HCT116 (cell line): ENCODE measurements at regions of chr11 and their contacts with region 1.

Region 1: GRCh38 chr11:7278314-7278917 is 26.7 kb downstream of the SYT9 start:
- DNase-seq: peak; percentile 24
- ATAC-seq: peak; percentile 77
- H3K4me3 ChIP-seq: no peak overlapping the region
- H3K27ac ChIP-seq: no peak overlapping the region
- H3K4me1 ChIP-seq: no peaks in the 10 kb centered on the region
- H3K27me3 ChIP-seq: peaks cover 20% of the 10 kb centered on the region; the same call in 1 of the 2 replicates
- CTCF ChIP-seq: peak in 2 of 3 experiments; percentile 59 to 69; a peak in 5 of 6 replicates
- POLR2A ChIP-seq: no peak
- RAD21 ChIP-seq: peak; percentile 57

Region 2: GRCh38 chr11:6812390-6813005 is 465.9 kb before region 1 on chr11:
- CTCF ChIA-PET with region 1: no interaction called
- POLR2A ChIA-PET with region 1: no interaction called
- RAD21 ChIA-PET with region 1: no interaction called
- intact Hi-C with region 1: loop called (anchors 10 kb)
- DNase-seq: peak; percentile 15
- ATAC-seq: peak; percentile 94
- H3K4me3 ChIP-seq: no peak overlapping the region
- H3K27ac ChIP-seq: no peak overlapping the region
- H3K4me1 ChIP-seq: no peaks in the 10 kb centered on the region
- H3K27me3 ChIP-seq: peaks cover 10% of the 10 kb centered on the region
- CTCF ChIP-seq: peak; percentile 28 to 94 (median 91); a peak in 5 of 6 replicates
- POLR2A ChIP-seq: no peak
- RAD21 ChIP-seq: peak; percentile 54